Heart right ventricle (tissue), 16 donors: ENCODE measurements at regions of chr14 and their contacts with region 1.

Region 1: DNA sequence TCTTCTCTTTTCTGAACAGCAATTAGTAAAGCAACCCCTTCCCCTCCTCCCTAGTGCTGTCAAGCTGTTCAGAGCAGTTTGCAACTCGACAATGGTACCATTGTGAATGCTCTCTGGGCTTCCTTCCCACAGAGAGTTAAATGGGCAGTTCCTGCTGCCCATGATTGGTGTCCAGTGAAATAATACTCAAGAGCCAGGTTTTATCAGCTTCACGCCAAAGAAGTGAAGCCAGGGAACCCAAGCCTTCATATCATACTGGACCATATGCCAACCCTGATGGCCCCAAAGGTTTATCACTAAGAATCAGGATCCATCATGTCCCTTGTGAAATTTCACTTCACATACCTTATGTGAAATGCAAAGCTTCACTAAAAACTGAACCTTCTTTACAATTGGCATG is 24.7 kb downstream of the INSM2 start:
- DNase-seq: no peak
- ATAC-seq: no peak
- H3K4me3 ChIP-seq: no peak overlapping the region
- H3K27ac ChIP-seq: no peak overlapping the region
- H3K4me1 ChIP-seq: peaks cover 0 to 7% (median 4%) of the 10 kb centered on the region in 9 donors
- H3K27me3 ChIP-seq: no peaks in the 10 kb centered on the region
- CTCF ChIP-seq: no peak

Region 2: GRCh38 chr14:35531960-35532747 is 26.5 kb before region 1 on chr14:
- intact Hi-C with region 1: loop called in 1 of 10 experiments (anchors 1 kb)
- DNase-seq: no peak
- ATAC-seq: no peak
- H3K4me3 ChIP-seq: no peak overlapping the region
- H3K27ac ChIP-seq: no peak overlapping the region
- H3K4me1 ChIP-seq: peaks cover 7 to 31% (median 29%) of the 10 kb centered on the region in 9 donors
- H3K27me3 ChIP-seq: peaks cover 10 to 81% (median 78%) of the 10 kb centered on the region in 7 donors
- CTCF ChIP-seq: no peak